MCF 10A (cell line): ENCODE measurements at regions of chr17 and their contacts with region 1.

Region 1: DNA sequence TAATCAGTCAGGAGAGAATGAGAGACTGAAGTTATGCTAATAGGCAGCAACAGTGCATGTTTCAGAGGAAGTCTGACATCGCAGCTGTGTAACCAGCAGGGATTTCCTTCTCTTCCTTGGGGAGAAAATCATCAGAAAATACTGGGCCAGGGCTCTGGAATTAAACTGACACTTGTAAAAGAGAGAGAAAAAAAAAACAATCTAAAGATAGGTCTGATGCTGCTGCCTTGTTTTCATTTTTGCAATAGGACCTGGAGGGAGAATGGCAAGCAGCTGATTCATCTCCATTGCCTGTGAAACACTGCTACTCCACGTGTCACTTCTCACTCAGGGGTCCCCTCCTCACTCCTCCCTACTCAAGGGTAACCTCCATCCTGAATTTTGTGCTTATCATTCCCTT is 17.7 kb upstream of the CORO6 start:
- DNase-seq: peak; percentile 33
- H3K4me3 Mint-ChIP-seq: no peak overlapping the region
- H3K27ac Mint-ChIP-seq: peak overlapping the region; percentile 68
- H3K4me1 Mint-ChIP-seq: peaks cover 35% of the 10 kb centered on the region
- H3K27me3 Mint-ChIP-seq: no peaks in the 10 kb centered on the region
- CTCF ChIP-seq: no peak

Region 2: GRCh38 chr17:29579866-29580771 is 60.3 kb before region 1 on chr17:
- CTCF ChIA-PET with region 1: interaction called, 8 read pairs
- POLR2A ChIA-PET with region 1: interaction called, 20 read pairs
- intact Hi-C with region 1: loop called (anchors 1 kb)
- DNase-seq: peak; percentile 87
- H3K4me3 Mint-ChIP-seq: peak overlapping the region; percentile 50
- H3K27ac Mint-ChIP-seq: peak overlapping the region; percentile 61
- H3K4me1 Mint-ChIP-seq: peaks cover 36% of the 10 kb centered on the region
- H3K27me3 Mint-ChIP-seq: no peaks in the 10 kb centered on the region
- CTCF ChIP-seq: peak; percentile 79

Region 3: DNA sequence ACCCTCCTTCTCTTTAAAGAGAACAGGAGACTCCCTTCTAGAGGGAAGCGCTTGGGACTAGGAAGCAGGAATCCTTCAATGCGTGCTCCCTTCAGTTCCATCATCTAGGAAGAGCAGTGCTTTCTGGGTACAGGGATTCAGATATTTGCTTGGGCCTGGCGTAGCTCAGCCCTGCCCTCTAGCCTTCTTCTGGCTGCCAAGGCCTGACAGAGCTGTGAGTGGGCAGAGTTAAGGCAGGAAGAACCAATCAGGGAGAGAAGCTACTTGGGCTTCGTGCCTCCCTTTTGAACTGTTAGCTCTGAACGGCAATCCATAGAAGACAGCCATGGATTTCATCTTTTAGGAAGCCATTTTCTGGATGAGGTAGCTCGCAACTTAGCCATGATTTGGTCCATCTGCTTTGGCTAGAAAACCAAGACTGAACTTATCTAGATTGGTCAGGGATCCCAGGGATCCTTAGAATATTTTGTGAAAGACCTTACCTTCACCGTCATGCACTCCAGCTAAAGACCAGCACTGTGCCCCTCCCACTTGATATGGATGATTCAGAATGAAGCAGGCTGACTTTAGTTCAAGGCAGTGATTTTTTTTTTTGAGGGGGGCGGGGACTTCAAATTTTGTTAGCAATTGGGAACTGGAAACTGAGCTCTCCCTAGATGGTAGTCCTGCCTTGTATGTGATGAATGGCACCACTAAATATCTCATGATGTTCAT is 15.2 kb before region 1 on chr17:
- CTCF ChIA-PET with region 1: interaction called, 11 read pairs
- POLR2A ChIA-PET with region 1: interaction called, 16 read pairs
- intact Hi-C with region 1: no loop called
- DNase-seq: peak; percentile 20
- H3K4me3 Mint-ChIP-seq: no peak overlapping the region
- H3K27ac Mint-ChIP-seq: no peak overlapping the region
- H3K4me1 Mint-ChIP-seq: peaks cover 39% of the 10 kb centered on the region
- H3K27me3 Mint-ChIP-seq: no peaks in the 10 kb centered on the region
- CTCF ChIP-seq: no peak

Region 4: DNA sequence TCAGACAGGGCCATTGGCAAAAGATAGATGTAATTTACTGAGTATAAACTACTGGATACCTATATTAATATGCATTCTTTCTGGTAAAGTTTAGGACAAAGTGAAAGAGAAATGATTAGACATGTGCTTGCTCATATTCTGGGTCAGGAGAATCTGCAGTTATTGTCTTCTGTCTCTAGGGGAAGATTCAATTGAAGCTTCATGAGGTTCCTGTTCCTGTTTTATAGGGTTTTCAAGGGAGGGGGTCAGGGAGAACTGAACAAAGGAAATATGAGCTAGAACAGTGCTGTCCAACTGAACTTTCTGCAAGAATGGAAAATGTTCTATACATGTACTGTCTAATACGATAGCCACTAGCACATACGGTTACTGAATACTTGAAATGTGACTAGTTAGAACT is 41.6 kb after region 1 on chr17:
- CTCF ChIA-PET with region 1: interaction called, 10 read pairs
- POLR2A ChIA-PET with region 1: interaction called, 4 read pairs
- intact Hi-C with region 1: no loop called
- DNase-seq: no peak
- H3K4me3 Mint-ChIP-seq: no peak overlapping the region
- H3K27ac Mint-ChIP-seq: no peak overlapping the region
- H3K4me1 Mint-ChIP-seq: no peaks in the 10 kb centered on the region
- H3K27me3 Mint-ChIP-seq: no peaks in the 10 kb centered on the region
- CTCF ChIP-seq: no peak

Region 5: DNA sequence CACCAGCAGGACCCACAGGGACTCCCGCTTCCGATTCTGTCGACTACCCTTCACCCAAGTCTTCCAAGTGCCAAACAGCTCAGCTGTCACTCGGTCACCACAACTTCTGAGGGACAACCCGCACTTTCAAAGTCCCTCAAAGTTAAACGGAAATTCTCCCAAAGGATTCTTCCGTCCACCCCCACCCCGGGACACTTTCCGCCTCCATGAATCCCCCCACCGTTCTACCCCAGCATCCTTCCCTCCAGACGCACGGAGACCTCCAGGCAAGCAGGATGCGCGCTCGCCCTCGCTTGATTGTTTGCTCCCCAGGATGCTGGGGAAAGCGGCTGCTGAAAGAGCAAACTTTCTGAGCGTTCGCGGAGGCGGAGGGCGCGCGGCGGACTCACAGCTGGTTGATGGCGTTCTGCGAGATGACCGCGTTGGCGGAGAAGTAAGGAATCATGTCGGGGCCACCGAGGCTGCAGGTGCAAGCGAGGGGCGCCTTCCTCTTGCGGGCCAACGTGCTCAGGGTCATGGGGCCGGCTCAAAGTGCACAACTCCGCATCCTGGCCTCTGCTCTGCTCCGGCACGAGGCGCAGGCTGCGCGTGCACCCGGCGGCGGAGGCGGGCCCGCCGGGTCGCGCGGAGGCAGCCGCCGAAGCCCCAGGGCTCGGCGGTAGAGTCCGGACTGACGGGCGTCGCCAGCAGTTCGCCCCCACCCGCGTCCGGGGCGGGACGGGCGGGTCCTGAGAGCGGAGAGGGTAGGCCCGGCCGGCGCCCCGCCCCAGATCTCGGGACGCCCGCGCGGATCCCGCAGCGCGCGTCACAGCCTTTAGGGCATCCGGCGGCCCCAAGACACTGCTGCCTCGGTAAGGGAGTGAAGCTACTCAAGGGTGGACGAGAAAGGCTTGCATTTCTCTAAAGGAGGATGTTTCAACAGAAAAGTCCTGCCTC is 120.6 kb after region 1 on chr17:
- CTCF ChIA-PET with region 1: interaction called, 5 read pairs
- POLR2A ChIA-PET with region 1: interaction called, 15 read pairs
- intact Hi-C with region 1: loop called (anchors 1 kb)
- DNase-seq: peak; percentile 86
- H3K4me3 Mint-ChIP-seq: peak overlapping the region; percentile 89
- H3K27ac Mint-ChIP-seq: peak overlapping the region; percentile 3
- H3K4me1 Mint-ChIP-seq: peaks cover 16% of the 10 kb centered on the region
- H3K27me3 Mint-ChIP-seq: no peaks in the 10 kb centered on the region
- CTCF ChIP-seq: no peak

Region 6: DNA sequence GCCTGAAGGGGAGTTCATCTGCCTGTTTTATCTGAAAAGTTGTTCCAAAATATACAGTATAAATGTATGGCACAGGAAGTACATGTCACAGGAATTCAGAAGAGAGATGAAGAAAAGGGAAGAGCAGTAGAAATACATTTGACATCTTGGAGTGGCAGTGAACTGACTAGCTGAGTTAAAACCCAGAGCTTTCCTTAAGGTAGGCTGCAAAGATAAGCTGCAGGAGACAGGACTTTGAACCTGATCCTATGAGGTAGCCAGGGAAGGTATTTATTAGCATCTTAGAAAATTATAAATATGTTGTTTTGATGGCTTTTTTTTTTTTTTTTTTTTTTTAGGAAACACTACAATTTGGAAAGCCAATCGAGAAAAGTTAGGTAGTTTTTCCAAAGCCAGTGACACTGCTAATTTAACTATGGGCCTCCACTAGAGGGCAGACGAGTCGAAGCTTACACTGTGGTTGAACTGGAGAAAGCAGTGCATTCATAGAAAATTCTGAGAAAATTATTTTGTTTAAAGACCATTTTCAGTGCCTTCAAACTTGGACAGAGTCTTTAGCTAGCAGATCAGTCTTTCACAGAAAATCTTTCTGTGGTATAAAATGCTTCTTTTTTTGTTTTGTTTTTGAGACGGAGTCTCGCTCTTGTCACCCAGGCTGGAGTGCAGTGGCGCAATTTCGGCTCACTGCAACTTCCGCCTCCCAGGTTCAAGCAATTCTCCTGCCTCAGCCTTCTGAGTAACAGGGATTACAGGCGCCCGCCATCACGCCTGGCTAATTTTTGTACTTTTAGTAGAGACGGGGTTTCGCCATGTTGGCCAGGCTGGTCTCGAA is 167.3 kb after region 1 on chr17:
- CTCF ChIA-PET with region 1: interaction called, 23 read pairs
- POLR2A ChIA-PET with region 1: interaction called, 8 read pairs
- intact Hi-C with region 1: loop called (anchors 1 kb)
- DNase-seq: peak; percentile 74
- H3K4me3 Mint-ChIP-seq: no peak overlapping the region
- H3K27ac Mint-ChIP-seq: no peak overlapping the region
- H3K4me1 Mint-ChIP-seq: no peaks in the 10 kb centered on the region
- H3K27me3 Mint-ChIP-seq: no peaks in the 10 kb centered on the region
- CTCF ChIP-seq: peak; percentile 74

Region 7: GRCh38 chr17:30093463-30094147 is 453.2 kb after region 1 on chr17:
- CTCF ChIA-PET with region 1: interaction called, 6 read pairs
- POLR2A ChIA-PET with region 1: interaction called, 6 read pairs
- intact Hi-C with region 1: loop called (anchors 1 kb)
- DNase-seq: peak; percentile 73
- H3K4me3 Mint-ChIP-seq: no peak overlapping the region
- H3K27ac Mint-ChIP-seq: no peak overlapping the region
- H3K4me1 Mint-ChIP-seq: peaks cover 14% of the 10 kb centered on the region
- H3K27me3 Mint-ChIP-seq: peaks cover 29% of the 10 kb centered on the region
- CTCF ChIP-seq: peak; percentile 78